ENCODE measurements at regions of chr4 and their contacts with region 1.

Region 1: GRCh38 chr4:155953151-155954114 is at the start of gene CTSO:
- DNase-seq: peak; percentile 67 to 79
- H3K4me3 ChIP-seq: peak within 1 kb of the TSS; percentile 40
- H3K4me1 ChIP-seq: peaks cover 6% of the 10 kb centered on the region
- H3K27me3 ChIP-seq: no peaks in the 10 kb centered on the region

Region 2: GRCh38 chr4:155809835-155810234 is 143.6 kb before region 1 on chr4:
- in situ Hi-C with region 1: loop called (anchors 5 kb)
- DNase-seq: peak; percentile 47 to 87
- H3K4me3 ChIP-seq: no peak overlapping the region
- H3K4me1 ChIP-seq: no peaks in the 10 kb centered on the region
- H3K27me3 ChIP-seq: no peaks in the 10 kb centered on the region

Region 3: GRCh38 chr4:155859721-155860120 is 93.7 kb before region 1 on chr4:
- in situ Hi-C with region 1: no loop called
- DNase-seq: no peak
- H3K4me3 ChIP-seq: no peak overlapping the region
- H3K4me1 ChIP-seq: peaks cover 11% of the 10 kb centered on the region
- H3K27me3 ChIP-seq: no peaks in the 10 kb centered on the region

Region 4: GRCh38 chr4:156672492-156673305 is 719.3 kb after region 1 on chr4:
- in situ Hi-C with region 1: no loop called
- DNase-seq: peak in 1 of 2 experiments; percentile 42
- H3K4me3 ChIP-seq: no peak overlapping the region
- H3K4me1 ChIP-seq: peaks cover 24% of the 10 kb centered on the region
- H3K27me3 ChIP-seq: no peaks in the 10 kb centered on the region